Activated B cell treated with CpG ODN at 0.5 μM for 24 hours (primary cell): ENCODE measurements at regions of chr22 and their contacts with region 1.

Region 1: DNA sequence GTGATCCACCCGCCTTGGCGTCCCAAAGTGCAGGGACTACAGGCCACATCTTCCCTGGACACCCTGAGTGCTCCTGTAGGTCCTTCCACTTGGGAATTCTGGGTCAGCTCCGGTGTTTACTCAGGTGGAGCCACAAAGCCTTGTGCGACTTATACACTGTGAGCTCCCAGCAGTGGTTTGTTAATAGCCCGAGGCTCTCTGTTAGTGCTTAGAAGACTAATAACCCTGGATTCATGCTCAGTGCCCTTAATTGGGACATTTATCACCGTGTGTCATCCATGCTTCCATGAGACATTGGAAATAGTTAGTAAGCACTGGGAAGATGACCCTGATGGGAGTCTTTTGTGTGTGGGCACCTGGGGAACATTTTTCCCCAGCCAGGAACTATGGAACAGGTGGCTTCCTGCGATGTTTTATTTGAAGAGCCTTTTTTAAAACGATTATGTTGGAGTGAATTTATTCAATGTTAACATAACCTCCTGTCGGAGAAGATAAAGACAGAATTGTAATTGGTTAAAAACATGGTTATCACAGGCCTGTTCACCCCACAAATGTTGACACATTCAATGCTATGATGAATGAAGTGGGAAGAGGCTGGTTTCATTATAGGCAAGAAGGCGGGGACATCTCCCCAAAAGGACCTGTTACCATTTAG is 188.8 kb downstream of the MYO18B start:
- DNase-seq: no peak
- ATAC-seq: no peak
- H3K4me3 Mint-ChIP-seq: no peak overlapping the region
- H3K27ac Mint-ChIP-seq: no peak overlapping the region
- H3K4me1 Mint-ChIP-seq: no peaks in the 10 kb centered on the region
- H3K27me3 Mint-ChIP-seq: peaks cover 19% of the 10 kb centered on the region
- CTCF ChIP-seq: no peak

Region 2: DNA sequence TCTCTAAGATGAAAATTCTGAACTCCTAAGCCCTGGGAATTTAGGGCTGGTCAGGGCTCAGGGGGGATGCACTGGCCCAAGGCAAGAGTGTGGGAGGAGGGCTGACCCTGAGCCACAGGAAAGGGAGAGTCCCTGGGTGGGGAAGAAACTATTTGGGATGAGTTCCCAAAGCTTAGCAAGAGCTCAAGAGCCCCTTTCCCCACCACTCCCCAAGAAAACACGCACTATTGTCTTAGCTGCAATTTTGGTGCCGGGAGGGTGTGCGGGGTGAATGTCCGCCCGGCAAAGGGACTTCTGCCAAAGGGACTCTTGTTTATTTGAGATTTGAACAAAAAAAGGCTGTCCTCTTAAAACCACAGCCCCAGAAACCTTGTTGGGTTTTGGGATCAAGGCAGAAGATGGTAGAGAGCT is 941.3 kb before region 1 on chr22:
- CTCF ChIA-PET with region 1: no interaction called
- POLR2A ChIA-PET with region 1: interaction called, 12 read pairs
- intact Hi-C with region 1: no loop called
- DNase-seq: no peak
- ATAC-seq: no peak
- H3K4me3 Mint-ChIP-seq: no peak overlapping the region
- H3K27ac Mint-ChIP-seq: no peak overlapping the region
- H3K4me1 Mint-ChIP-seq: no peaks in the 10 kb centered on the region
- H3K27me3 Mint-ChIP-seq: peaks cover 10% of the 10 kb centered on the region
- CTCF ChIP-seq: no peak

Region 3: GRCh38 chr22:25804676-25805075 is 126.2 kb before region 1 on chr22:
- CTCF ChIA-PET with region 1: no interaction called
- POLR2A ChIA-PET with region 1: no interaction called
- intact Hi-C with region 1: no loop called
- DNase-seq: no peak
- ATAC-seq: no peak
- H3K4me3 Mint-ChIP-seq: no peak overlapping the region
- H3K27ac Mint-ChIP-seq: no peak overlapping the region
- H3K4me1 Mint-ChIP-seq: no peaks in the 10 kb centered on the region
- H3K27me3 Mint-ChIP-seq: peaks cover 14% of the 10 kb centered on the region
- CTCF ChIP-seq: no peak

Region 4: DNA sequence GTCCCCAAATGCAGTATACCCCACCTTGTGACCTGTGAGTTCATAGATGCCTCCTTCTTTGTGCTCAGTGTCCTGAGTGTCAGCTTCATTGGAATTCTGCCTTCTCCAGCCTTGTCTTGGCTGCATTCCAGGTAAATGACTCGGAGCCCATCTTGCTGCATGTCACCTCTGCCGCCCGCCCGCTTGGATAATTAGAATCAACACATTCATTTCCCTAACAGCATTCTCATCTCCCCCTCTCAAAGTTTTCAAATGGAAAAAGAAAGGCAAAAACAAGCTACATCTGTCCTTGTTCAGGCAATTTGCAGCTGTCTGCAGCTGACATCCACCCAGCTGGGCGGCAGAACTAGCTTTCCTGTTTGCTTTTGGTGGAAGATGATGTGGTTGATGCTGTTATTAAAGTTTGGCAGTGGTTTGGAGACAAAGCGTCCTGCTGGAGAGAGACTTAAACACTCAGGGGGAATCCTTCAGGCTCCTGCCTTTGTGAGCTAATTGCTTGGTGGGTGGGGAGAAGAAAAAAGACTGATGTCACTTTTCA is 39.6 kb after region 1 on chr22:
- CTCF ChIA-PET with region 1: no interaction called
- POLR2A ChIA-PET with region 1: no interaction called
- intact Hi-C with region 1: no loop called
- DNase-seq: no peak
- ATAC-seq: no peak
- H3K4me3 Mint-ChIP-seq: no peak overlapping the region
- H3K27ac Mint-ChIP-seq: no peak overlapping the region
- H3K4me1 Mint-ChIP-seq: peaks cover 5% of the 10 kb centered on the region
- H3K27me3 Mint-ChIP-seq: peaks cover 9% of the 10 kb centered on the region
- CTCF ChIP-seq: no peak